ENCODE measurements at regions of chr3 and their contacts with region 1.

Region 1: GRCh38 chr3:126267226-126267975 is 87.0 kb upstream of the ALDH1L1 start:
- DNase-seq: peak; percentile 77 to 90 (median 82)
- H3K4me3 ChIP-seq: peak overlapping the region; percentile 27
- H3K27ac ChIP-seq: peak overlapping the region; percentile 83 to 90
- H3K4me1 ChIP-seq: peaks cover 13% of the 10 kb centered on the region
- H3K27me3 ChIP-seq: no peaks in the 10 kb centered on the region
- CTCF ChIP-seq: peak in 1 of 3 donors; percentile 15
- EP300 ChIP-seq: peak; percentile 48
- POLR2A ChIP-seq: peak; percentile 29

Region 2: DNA sequence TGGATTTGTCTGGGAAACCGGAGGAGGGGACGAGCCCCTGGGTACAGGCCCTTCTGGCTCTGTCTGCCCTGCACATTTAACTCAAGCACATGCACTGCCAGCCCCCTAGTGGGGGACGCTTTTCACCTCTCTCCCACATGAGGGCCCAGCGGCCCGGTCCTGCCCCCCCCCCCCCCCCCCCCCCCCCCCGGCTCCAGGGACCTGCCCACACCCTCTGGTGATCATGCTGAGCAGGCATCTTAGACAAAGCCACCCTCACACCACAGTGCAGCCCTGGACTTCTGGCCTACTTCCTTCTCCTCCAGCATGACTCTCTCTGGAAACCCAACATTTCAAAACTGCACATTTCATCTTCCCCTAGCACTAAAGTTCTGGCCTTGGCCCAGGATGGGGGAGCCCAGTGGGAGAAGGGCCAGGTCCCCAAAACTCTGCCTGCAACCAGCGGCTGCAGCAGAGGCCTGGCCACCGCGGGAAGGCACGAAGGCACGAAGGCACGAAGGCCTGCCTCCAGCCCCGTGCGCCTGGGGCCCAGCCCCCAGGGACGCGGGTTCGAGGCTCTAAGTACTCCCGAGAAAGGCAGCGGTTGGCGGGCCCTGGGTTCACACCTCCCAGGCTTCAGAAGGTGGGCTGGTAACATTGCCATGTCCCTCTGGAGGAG is 75.7 kb after region 1 on chr3:
- intact Hi-C with region 1: loop called in 1 of 4 experiments (anchors 10 kb)
- DNase-seq: peak; percentile 59 to 82 (median 63)
- H3K4me3 ChIP-seq: no peak overlapping the region
- H3K27ac ChIP-seq: peak overlapping the region in 1 of 2 donors; percentile 2
- H3K4me1 ChIP-seq: peaks cover 24% of the 10 kb centered on the region
- H3K27me3 ChIP-seq: no peaks in the 10 kb centered on the region
- CTCF ChIP-seq: no peak
- EP300 ChIP-seq: no peak
- POLR2A ChIP-seq: no peak

Region 3: DNA sequence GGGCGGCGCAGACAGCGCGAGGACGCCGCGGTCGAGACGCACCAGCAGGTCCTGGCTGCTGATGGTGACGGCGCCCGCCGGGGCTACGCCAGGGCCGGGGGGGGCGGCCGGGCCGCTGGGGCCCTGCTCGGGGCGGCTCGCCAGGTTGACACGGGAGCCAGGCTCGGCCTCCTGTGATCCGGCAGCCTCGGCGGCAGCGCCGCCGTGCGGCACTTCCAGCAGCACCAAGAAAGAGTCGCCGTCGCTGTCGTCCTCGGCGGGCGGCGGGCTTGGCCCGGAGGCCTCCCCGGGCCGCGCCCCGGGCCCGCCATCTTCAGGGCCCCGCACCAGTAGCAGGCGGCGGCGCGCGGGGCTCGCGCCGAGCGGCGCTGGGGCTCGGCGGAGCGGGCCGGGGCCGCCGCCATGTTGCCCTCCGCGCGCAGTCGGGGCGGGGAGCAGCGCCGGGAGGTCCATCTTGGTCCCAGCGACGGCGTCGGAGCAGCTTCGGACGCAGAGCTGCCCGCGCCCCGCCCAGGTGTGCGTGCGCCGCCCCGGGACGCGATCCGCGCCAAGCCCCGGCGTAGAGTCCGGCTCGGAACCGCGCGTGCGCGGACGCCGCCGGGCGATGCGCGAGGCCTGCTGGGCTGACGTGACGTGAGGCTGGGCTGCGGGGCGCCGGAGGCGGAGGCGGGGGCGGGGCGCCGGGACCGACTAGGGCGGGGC is 208.2 kb after region 1 on chr3 and contains the start of gene ZXDC:
- intact Hi-C with region 1: loop called in 1 of 4 experiments (anchors 10 kb)
- DNase-seq: peak; percentile 94 to 97 (median 95)
- H3K4me3 ChIP-seq: peak within 1 kb of the TSS; percentile 63
- H3K27ac ChIP-seq: peak within 1 kb of the TSS; percentile 90 to 93
- H3K4me1 ChIP-seq: peaks cover 23% of the 10 kb centered on the region
- H3K27me3 ChIP-seq: no peaks in the 10 kb centered on the region
- CTCF ChIP-seq: peak in 2 of 3 donors; percentile 56 to 64
- EP300 ChIP-seq: no peak
- POLR2A ChIP-seq: peak; percentile 74
- total RNA-seq, gene ZXDC: 32.2 to 47.3 (median 32.9) TPM